Aorta (tissue), 5 donors: ENCODE measurements at regions of chr4 and their contacts with region 1.

Region 1: DNA sequence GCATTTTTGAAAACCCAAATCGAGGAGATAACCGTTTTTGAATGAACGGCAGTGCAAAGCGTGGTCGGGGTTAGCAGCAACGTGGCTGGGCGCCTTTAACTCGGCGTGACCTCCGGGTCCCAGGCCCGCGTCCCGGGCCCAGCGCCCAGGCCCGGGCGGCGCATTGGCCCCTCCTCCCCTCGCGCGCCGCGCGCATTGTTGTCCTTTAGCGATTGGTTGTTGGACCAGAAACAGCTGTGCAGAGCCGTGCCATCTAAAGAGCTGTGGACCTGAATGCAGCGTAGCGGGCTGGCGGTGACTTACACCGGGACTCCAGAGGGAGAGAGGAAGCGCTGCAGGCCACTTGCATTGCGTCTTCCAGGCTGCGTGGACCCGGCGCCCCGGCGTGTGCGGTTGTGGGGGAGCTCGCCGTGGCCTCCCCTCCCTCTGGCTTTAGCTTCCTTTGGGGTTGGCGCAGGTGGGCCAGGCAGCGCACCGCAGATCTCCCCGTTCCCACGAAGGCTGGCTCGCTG is at the start of gene STOX2:
- DNase-seq: peak; percentile 76 to 89
- ATAC-seq: peak; percentile 89
- H3K4me3 ChIP-seq: peak within 1 kb of the TSS; percentile 78 to 80
- H3K27ac ChIP-seq: peak within 1 kb of the TSS in 1 of 2 donors; percentile 28
- H3K4me1 ChIP-seq: no peaks in the 10 kb centered on the region
- H3K27me3 ChIP-seq: no peaks in the 10 kb centered on the region
- total RNA-seq, gene STOX2: 5.7 to 10.9 TPM

Region 2: DNA sequence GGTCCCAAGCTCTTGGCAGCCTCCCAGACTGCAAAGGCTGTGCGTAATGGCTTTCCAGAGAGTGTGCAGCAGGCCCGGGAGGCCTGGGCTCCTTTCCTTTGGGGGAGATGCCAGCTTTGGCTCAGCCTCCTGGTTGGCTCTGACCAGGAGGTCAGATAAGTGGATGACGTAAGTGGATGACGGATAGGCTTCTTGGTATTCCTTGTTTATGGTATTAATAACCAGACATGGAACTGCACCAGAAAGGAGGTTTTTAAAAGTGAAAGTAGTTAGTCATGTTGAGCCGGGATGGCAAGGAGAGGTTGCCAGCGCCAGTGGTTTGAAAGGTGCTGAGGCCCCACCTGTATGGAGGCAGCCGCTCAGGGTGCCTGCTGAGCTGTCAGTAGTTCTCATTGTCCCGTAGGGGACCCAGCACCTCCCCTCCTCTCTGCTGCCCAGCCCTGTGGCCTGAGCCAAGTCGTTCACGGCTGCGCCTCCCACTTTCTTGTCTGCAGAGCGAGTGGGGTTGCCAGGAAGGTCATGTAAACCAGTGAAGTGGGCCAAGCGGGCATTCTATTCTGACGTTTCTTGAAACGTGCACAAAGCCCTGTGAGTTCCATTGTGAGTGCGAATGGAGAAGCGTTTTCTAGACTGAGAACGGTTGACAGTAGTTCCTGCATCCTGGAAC is 28.7 kb before region 1 on chr4:
- intact Hi-C with region 1: loop called in 1 of 2 experiments (anchors 2 kb)
- DNase-seq: peak; percentile 83 to 94
- ATAC-seq: peak; percentile 93
- H3K4me3 ChIP-seq: peak overlapping the region in 1 of 2 donors; percentile 10
- H3K27ac ChIP-seq: peak overlapping the region; percentile 0 to 32
- H3K4me1 ChIP-seq: no peaks in the 10 kb centered on the region
- H3K27me3 ChIP-seq: no peaks in the 10 kb centered on the region

Region 3: DNA sequence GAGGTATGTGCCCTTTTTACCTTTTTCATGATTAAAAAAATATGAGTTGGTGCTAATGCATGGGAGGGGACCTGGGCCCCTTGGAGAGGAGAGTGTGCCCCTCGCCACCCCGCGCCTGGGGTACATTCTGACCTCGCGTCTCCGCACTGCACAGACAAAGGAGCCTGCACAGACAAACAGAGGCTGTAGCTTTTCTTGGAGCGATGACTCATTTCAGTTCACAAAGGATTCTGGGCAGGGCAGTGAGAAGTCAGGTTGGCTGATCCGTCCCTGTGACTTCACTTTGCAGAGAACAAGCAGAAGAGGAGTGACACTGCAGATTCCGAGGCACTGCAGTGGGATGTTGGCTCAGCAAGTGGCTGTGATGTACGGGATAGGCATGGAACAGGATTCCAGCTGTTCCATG is 82.9 kb after region 1 on chr4:
- intact Hi-C with region 1: loop called in 1 of 2 experiments (anchors 5 kb)
- DNase-seq: peak; percentile 74 to 78
- ATAC-seq: peak; percentile 90
- H3K4me3 ChIP-seq: peak overlapping the region in 1 of 2 donors; percentile 11
- H3K27ac ChIP-seq: peak overlapping the region; percentile 7 to 29
- H3K4me1 ChIP-seq: no peaks in the 10 kb centered on the region
- H3K27me3 ChIP-seq: no peaks in the 10 kb centered on the region

Region 4: DNA sequence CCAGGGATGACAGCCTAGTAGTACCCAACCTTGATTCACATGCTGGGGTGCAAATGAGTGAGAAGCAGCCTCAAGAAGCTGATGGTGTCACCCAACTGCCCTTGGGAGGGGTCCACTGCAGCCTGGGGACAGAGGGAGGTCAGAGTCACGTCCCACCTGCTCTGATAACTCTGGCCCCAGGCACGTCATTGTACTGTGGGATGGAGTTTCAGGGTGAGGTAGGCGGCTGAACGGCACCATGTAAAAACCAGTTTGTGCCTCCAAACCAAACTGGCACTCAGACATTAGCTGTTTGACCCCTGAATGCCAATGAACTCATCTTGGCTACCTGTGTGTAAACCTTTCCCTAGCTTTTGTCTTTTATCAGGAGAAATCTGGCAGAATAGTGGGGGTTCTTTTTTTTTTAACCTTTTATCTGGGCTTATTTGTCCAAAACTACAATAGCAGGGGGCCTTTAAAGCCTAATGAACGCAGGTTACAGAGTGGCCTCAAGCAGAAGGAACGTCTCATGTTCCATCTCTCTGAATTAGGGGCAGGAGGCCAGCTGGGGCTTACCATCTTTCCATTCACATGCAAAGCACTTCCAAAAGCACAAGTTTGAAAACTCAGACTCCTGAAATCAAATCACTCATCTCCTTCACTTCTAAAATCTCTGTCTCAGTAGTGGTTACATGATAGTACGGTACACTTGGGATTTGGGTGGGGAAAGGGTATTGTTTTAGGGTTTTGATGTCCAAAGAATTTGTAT is 479.8 kb after region 1 on chr4:
- intact Hi-C with region 1: no loop called
- DNase-seq: no peak
- ATAC-seq: peak; percentile 8
- H3K4me3 ChIP-seq: no peak overlapping the region
- H3K27ac ChIP-seq: peak overlapping the region in 1 of 2 donors; percentile 76
- H3K4me1 ChIP-seq: no peaks in the 10 kb centered on the region
- H3K27me3 ChIP-seq: no peaks in the 10 kb centered on the region